GM12878 (cell line): ENCODE measurements at regions of chr20 and their contacts with region 1.

Region 1: DNA sequence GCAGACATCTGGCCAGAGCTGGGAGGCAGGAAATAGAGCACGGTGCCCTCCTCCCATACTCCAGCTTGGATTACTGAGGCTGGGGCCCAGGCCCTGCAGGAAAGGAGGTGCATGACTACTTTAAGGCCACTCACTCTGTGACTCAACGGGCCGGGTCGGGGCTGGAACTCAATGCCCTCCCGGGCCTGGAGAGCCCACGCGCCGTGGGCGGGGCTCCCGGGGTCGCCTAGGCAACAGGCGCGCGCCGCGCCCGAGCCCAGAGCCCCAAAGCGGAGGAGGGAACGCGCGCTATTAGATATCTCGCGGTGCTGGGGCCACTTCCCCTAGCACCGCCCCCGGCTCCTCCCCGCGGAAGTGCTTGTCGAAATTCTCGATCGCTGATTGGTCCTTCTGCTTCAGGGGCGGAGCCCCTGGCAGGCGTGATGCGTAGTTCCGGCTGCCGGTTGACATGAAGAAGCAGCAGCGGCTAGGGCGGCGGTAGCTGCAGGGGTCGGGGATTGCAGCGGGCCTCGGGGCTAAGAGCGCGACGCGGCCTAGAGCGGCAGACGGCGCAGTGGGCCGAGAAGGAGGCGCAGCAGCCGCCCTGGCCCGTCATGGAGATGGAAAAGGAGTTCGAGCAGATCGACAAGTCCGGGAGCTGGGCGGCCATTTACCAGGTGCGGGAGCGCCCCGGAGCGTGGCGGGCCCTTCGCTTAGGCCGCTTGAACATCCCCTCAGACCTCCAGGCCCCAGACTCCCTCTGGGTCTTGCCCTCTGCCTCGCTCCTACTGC is at the start of gene PTPN1:
- DNase-seq: peak; percentile 94
- ATAC-seq: peak; percentile 90
- H3K4me3 ChIP-seq: peak within 1 kb of the TSS; percentile 100
- H3K27ac ChIP-seq: peak within 1 kb of the TSS; percentile 98
- H3K4me1 ChIP-seq: peaks cover 13% of the 10 kb centered on the region
- H3K27me3 ChIP-seq: no peaks in the 10 kb centered on the region
- CTCF ChIP-seq: no peak
- EP300 ChIP-seq: no peak
- POLR2A ChIP-seq: peak; percentile 100
- RAD21 ChIP-seq: no peak
- polyA plus RNA-seq, gene PTPN1: 15.9 to 20.2 TPM

Region 2: GRCh38 chr20:50346372-50347283 is 163.5 kb before region 1 on chr20:
- CTCF ChIA-PET with region 1: no interaction called
- POLR2A ChIA-PET with region 1: no interaction called
- RAD21 ChIA-PET with region 1: no interaction called
- SMC1A ChIA-PET with region 1: no interaction called
- in situ Hi-C with region 1: no loop called
- intact Hi-C with region 1: no loop called
- DNase-seq: no peak
- ATAC-seq: no peak
- H3K4me3 ChIP-seq: no peak overlapping the region
- H3K27ac ChIP-seq: no peak overlapping the region
- H3K4me1 ChIP-seq: peaks cover 33% of the 10 kb centered on the region
- H3K27me3 ChIP-seq: no peaks in the 10 kb centered on the region
- CTCF ChIP-seq: no peak
- EP300 ChIP-seq: no peak
- POLR2A ChIP-seq: no peak
- RAD21 ChIP-seq: no peak

Region 3: DNA sequence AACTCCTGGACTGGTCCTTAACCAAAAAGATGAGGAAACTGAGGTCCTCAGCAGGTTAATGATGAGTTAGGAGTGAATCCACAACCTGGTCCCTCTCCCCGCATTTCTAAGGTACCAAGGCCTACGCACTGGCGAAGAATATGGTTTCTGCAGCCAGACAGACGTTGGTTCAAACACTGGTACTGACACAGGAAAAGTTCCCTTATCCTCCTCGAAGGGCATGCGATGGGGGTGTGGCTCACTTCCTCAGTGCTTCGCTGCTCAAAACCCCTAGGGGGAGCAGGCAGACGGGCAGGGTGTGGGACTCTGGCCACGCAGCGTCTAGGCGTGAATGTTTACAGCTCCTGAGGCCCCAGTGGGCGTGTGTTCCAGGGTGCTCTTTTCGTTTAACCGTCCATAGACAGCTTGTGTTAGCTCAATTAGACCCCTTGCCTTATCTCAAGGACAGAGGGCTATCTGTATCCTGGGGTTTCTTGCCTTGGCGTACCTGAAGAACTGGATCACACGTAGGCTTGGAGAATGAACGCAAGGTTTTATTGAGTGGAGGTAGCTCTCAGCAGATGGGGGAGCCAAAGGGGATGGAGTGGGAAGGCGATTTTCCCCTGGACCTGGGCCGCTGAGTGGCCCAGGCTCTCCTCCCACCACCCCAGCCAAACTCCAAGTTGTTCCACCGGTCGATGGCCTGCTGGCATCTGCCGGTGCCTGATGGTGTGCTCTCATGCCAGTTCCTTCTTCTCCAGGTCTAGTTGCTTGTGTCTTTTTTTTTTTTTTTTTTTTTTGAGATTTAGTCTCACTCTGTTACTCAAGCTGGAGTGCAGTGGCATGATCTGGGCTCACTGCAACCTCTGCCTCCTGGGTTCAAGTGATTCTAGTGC is 31.7 kb before region 1 on chr20:
- CTCF ChIA-PET with region 1: interaction called, 13 read pairs
- POLR2A ChIA-PET with region 1: interaction called, 29 read pairs
- RAD21 ChIA-PET with region 1: interaction called, 23 read pairs
- SMC1A ChIA-PET with region 1: interaction called, 2,799 read pairs
- in situ Hi-C with region 1: no loop called
- intact Hi-C with region 1: loop called (anchors 2 kb)
- DNase-seq: no peak
- ATAC-seq: peak; percentile 99
- H3K4me3 ChIP-seq: no peak overlapping the region
- H3K27ac ChIP-seq: no peak overlapping the region
- H3K4me1 ChIP-seq: peaks cover 21% of the 10 kb centered on the region
- H3K27me3 ChIP-seq: no peaks in the 10 kb centered on the region
- CTCF ChIP-seq: peak; percentile 60 to 87 (median 84)
- EP300 ChIP-seq: no peak
- POLR2A ChIP-seq: no peak
- RAD21 ChIP-seq: peak; percentile 79

Region 4: DNA sequence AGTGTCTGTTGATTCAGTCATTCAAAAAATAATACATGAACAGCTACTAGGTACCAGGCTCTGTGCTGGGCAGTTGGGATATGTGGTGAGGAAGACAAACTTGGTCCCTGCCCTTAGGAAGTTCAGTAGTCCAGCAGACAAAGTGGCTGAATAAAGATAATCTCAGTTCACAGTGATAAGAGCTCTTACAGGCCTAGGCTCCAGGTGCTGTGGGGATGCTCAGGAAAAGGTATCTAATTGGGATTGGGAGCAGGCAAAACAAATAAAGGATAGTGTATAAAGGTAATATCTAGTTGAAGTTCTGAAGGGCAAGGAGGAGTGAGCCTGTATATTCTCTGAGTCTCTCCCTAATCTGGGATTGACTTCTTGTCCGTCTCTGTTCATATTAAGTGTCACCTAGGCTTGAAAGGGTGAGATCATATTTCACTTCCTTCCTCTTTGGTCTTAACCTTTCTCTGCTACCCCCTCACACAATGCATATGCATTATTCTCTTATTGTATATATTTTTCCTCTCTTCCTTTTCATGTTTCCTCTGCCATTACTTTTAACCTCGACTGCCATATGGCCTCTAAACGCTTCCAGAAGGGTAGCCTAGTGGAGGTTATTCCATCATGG is 13.5 kb after region 1 on chr20:
- CTCF ChIA-PET with region 1: interaction called, 11 read pairs
- POLR2A ChIA-PET with region 1: interaction called, 56 read pairs
- RAD21 ChIA-PET with region 1: interaction called, 40 read pairs
- SMC1A ChIA-PET with region 1: interaction called, 2,799 read pairs
- in situ Hi-C with region 1: no loop called
- intact Hi-C with region 1: no loop called
- DNase-seq: no peak
- ATAC-seq: peak; percentile 46
- H3K4me3 ChIP-seq: peak overlapping the region; percentile 46; the same call in 1 of the 2 replicates
- H3K27ac ChIP-seq: peak overlapping the region; percentile 47
- H3K4me1 ChIP-seq: peaks cover 76% of the 10 kb centered on the region
- H3K27me3 ChIP-seq: no peaks in the 10 kb centered on the region
- CTCF ChIP-seq: no peak
- EP300 ChIP-seq: no peak
- POLR2A ChIP-seq: no peak
- RAD21 ChIP-seq: no peak

Region 5: DNA sequence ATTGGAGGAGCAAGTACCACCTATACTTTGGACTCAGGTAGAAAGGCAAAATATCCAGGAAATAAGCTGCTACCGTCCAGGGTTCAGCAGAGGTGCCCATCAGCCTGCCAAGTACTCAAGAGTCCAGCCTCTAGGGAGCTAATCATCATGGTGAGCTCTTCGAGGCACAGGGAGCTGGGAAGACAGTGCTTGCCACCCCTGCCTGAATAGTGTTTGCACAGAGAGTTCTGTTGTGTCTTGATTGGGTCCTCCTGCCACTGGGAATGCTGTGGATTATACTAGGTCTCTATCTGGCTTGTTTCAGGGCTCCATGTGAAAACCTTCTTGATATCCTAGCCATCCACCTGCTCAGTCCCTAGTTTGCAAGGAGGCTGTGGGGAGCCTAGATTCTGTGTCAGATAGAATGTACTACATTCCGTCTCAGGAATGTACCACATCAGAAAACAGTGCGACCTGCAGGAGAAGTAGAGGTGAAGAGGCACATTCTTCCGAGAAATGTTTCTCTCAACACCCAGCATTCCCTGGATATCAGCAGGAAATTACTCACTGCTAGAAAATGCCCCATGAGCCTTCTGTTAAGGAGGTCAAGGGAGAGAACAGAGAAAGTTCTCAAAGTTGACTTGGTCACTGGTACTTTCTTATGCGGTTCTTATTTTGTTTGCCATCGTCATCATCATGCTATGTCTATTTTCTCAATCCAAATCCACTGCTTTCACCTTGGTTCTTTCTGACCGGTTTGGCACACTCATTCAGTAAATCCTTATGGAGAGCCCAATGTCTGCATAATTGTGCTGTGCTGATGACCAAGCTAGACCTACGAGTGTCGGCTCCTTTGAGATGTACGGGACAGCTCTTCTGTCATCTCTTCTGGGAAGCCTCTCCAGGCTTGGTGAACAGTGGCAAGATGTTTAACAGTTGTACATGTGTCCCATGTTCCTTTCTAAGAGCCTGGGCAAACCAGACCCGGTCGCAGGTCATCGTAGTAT is 30.8 kb after region 1 on chr20:
- CTCF ChIA-PET with region 1: interaction called, 13 read pairs
- POLR2A ChIA-PET with region 1: interaction called, 44 read pairs
- RAD21 ChIA-PET with region 1: interaction called, 167 read pairs
- SMC1A ChIA-PET with region 1: interaction called, 2,799 read pairs
- in situ Hi-C with region 1: no loop called
- intact Hi-C with region 1: no loop called
- DNase-seq: no peak
- ATAC-seq: peak; percentile 18
- H3K4me3 ChIP-seq: peak overlapping the region; percentile 42
- H3K27ac ChIP-seq: peak overlapping the region; percentile 78
- H3K4me1 ChIP-seq: peaks cover 67% of the 10 kb centered on the region
- H3K27me3 ChIP-seq: no peaks in the 10 kb centered on the region
- CTCF ChIP-seq: no peak
- EP300 ChIP-seq: no peak
- POLR2A ChIP-seq: peak; percentile 28; the same call in 1 of the 2 replicates
- RAD21 ChIP-seq: no peak

Region 6: GRCh38 chr20:50569864-50570836 is 60.0 kb after region 1 on chr20:
- CTCF ChIA-PET with region 1: interaction called, 240 read pairs
- POLR2A ChIA-PET with region 1: interaction called, 25 read pairs
- RAD21 ChIA-PET with region 1: interaction called, 54 read pairs
- SMC1A ChIA-PET with region 1: interaction called, 2,799 read pairs
- in situ Hi-C with region 1: no loop called
- intact Hi-C with region 1: loop called (anchors 1 kb)
- DNase-seq: peak; percentile 68
- ATAC-seq: peak; percentile 96
- H3K4me3 ChIP-seq: no peak overlapping the region
- H3K27ac ChIP-seq: peak overlapping the region; percentile 83
- H3K4me1 ChIP-seq: peaks cover 25% of the 10 kb centered on the region
- H3K27me3 ChIP-seq: no peaks in the 10 kb centered on the region
- CTCF ChIP-seq: peak; percentile 70 to 90 (median 74)
- EP300 ChIP-seq: peak; percentile 61 to 71; a peak in 2 of 4 replicates
- POLR2A ChIP-seq: peak; percentile 26; the same call in 1 of the 2 replicates
- RAD21 ChIP-seq: peak; percentile 88

Region 7: GRCh38 chr20:50799890-50800655 is 290.0 kb after region 1 on chr20:
- CTCF ChIA-PET with region 1: no interaction called
- POLR2A ChIA-PET with region 1: no interaction called
- RAD21 ChIA-PET with region 1: no interaction called
- SMC1A ChIA-PET with region 1: no interaction called
- in situ Hi-C with region 1: loop called (anchors 10 kb)
- intact Hi-C with region 1: no loop called
- DNase-seq: no peak
- ATAC-seq: peak; percentile 64
- H3K4me3 ChIP-seq: peak overlapping the region; percentile 63
- H3K27ac ChIP-seq: peak overlapping the region; percentile 95
- H3K4me1 ChIP-seq: peaks cover 29% of the 10 kb centered on the region
- H3K27me3 ChIP-seq: no peaks in the 10 kb centered on the region
- CTCF ChIP-seq: no peak
- EP300 ChIP-seq: no peak
- POLR2A ChIP-seq: no peak
- RAD21 ChIP-seq: no peak